Activated CD4-positive, alpha-beta memory T cell treated with anti-CD3 and anti-CD28 coated beads for 36 hours (primary cell): ENCODE measurements at regions of chr1 and their contacts with region 1.

Region 1: GRCh38 chr1:52636721-52637695 is 4.0 kb downstream of the SHISAL2A start:
- DNase-seq: peak; percentile 86
- H3K4me3 Mint-ChIP-seq: peak overlapping the region; percentile 65
- H3K27ac Mint-ChIP-seq: peak overlapping the region; percentile 98
- H3K4me1 Mint-ChIP-seq: peaks cover 75% of the 10 kb centered on the region
- H3K27me3 Mint-ChIP-seq: no peaks in the 10 kb centered on the region

Region 2: GRCh38 chr1:52056163-52056936 is 580.7 kb before region 1 on chr1 and contains the start of gene BTF3L4:
- CTCF ChIA-PET with region 1: no interaction called
- POLR2A ChIA-PET with region 1: no interaction called
- intact Hi-C with region 1: loop called (anchors 10 kb)
- DNase-seq: peak; percentile 97
- H3K4me3 Mint-ChIP-seq: peak within 1 kb of the TSS; percentile 94
- H3K27ac Mint-ChIP-seq: peak within 1 kb of the TSS; percentile 98
- H3K4me1 Mint-ChIP-seq: peaks cover 53% of the 10 kb centered on the region
- H3K27me3 Mint-ChIP-seq: no peaks in the 10 kb centered on the region
- total RNA-seq, gene BTF3L4: 32.5 to 35.2 TPM

Region 3: DNA sequence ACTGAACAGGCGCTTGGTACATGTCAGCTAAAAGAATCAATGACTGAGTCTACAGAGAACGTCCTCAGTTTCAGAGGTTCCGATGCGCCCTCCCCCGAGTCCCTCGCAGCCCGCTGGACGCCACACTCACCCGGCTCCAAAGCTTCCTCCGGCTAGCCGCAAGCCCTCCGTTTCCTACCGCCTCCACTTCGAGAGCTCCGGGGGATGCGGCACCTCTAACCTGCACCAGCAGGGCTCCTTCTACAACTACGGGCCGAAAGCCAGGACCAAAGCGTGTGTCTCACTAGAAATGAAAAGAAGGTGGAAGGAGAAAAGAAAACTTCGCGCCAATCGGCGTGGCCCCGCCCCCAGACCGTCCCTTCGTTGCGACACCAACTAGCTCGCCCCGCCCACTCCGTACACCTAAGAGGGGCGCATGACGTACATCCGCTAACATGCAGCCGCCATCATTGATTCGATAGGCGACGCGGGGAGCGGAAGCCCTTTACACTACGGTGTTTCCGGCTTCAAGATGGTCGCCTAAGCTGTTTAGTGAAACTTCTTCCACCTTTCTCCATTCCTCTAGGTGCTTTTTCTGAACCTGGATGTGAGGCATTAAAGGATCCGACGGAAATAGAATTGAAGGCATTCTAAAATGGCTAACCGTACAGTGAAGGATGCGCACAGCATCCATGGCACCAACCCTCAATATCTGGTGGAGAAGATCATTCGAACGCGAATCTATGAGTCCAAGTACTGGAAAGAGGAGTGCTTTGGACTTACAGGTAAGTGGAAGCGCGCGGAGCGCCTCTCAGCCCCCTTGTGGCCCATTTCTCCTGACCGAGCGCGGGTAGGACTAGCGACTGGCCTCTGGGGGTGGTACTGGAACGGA is 232.7 kb before region 1 on chr1 and contains the starts of genes ORC1 and PRPF38A:
- CTCF ChIA-PET with region 1: interaction called, 4 read pairs
- POLR2A ChIA-PET with region 1: interaction called, 16 read pairs
- intact Hi-C with region 1: no loop called
- DNase-seq: peak; percentile 99
- H3K4me3 Mint-ChIP-seq: peak within 1 kb of the TSS; percentile 100
- H3K27ac Mint-ChIP-seq: peak within 1 kb of the TSS; percentile 96
- H3K4me1 Mint-ChIP-seq: peaks cover 39% of the 10 kb centered on the region
- H3K27me3 Mint-ChIP-seq: no peaks in the 10 kb centered on the region
- total RNA-seq, gene ORC1: 42.5 to 43.0 TPM
- total RNA-seq, gene PRPF38A: 74.6 to 79.7 TPM

Region 4: DNA sequence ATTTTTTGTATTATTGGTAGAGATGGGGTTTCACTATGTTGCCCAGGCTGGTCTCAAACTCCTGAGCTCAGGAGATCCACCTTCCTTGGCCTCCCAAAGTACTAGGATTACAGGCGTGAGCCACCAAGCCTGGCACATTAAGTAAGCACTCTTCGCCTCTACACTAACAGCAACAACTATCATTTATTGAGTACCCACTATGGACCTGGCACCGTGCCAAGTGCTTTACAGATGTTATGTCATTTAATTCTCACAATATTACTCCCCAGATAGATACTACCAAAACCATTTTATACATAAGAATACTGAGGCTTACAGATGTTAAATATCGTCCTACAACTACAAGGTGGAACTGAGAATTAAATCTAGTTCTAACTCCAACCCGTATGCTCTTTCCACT is 134.2 kb before region 1 on chr1:
- CTCF ChIA-PET with region 1: no interaction called
- POLR2A ChIA-PET with region 1: no interaction called
- intact Hi-C with region 1: no loop called
- DNase-seq: no peak
- H3K4me3 Mint-ChIP-seq: no peak overlapping the region
- H3K27ac Mint-ChIP-seq: no peak overlapping the region
- H3K4me1 Mint-ChIP-seq: no peaks in the 10 kb centered on the region
- H3K27me3 Mint-ChIP-seq: no peaks in the 10 kb centered on the region

Region 5: GRCh38 chr1:52601991-52602855 is 34.8 kb before region 1 on chr1 and contains the start of gene GPX7:
- CTCF ChIA-PET with region 1: interaction called, 3 read pairs
- POLR2A ChIA-PET with region 1: interaction called, 10 read pairs
- intact Hi-C with region 1: loop called (anchors 2 kb)
- DNase-seq: peak; percentile 65
- H3K4me3 Mint-ChIP-seq: peak within 1 kb of the TSS; percentile 91
- H3K27ac Mint-ChIP-seq: peak within 1 kb of the TSS; percentile 90
- H3K4me1 Mint-ChIP-seq: peaks cover 40% of the 10 kb centered on the region
- H3K27me3 Mint-ChIP-seq: no peaks in the 10 kb centered on the region
- total RNA-seq, gene GPX7: 19.9 to 20.6 TPM

Region 6: DNA sequence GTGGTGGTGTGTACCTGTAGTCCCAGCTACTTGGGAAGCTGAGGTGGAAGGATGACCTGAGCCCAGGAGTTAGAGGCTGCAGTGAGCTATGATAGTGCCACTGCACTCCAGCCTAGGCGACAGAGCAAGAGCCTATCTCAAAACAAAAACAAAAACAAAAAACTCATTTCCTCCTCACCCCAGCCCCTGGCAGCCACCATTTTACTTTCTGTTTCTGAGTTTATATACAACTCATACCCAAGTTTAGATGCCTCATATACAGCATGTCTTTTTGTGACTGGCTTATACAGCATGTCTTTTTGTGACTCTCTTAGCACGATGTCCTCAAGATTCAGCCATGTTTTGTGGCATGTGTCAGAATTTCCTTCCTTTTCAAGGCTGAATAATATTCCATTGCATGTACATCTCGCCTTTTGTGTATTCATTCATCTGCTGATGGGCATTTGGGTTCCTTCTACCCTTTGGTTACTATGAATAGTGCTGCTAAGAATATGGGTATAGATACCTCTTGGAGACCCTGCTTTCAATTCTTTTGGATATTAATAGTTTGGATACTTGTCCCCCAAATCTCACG is 46.4 kb after region 1 on chr1:
- CTCF ChIA-PET with region 1: interaction called, 10 read pairs
- POLR2A ChIA-PET with region 1: no interaction called
- intact Hi-C with region 1: loop called (anchors 2 kb)
- DNase-seq: no peak
- H3K4me3 Mint-ChIP-seq: no peak overlapping the region
- H3K27ac Mint-ChIP-seq: peak overlapping the region; percentile 28
- H3K4me1 Mint-ChIP-seq: peaks cover 6% of the 10 kb centered on the region
- H3K27me3 Mint-ChIP-seq: no peaks in the 10 kb centered on the region